Astrocyte of the cerebellum (primary cell): ENCODE measurements at regions of chr4 and their contacts with region 1.

Region 1: DNA sequence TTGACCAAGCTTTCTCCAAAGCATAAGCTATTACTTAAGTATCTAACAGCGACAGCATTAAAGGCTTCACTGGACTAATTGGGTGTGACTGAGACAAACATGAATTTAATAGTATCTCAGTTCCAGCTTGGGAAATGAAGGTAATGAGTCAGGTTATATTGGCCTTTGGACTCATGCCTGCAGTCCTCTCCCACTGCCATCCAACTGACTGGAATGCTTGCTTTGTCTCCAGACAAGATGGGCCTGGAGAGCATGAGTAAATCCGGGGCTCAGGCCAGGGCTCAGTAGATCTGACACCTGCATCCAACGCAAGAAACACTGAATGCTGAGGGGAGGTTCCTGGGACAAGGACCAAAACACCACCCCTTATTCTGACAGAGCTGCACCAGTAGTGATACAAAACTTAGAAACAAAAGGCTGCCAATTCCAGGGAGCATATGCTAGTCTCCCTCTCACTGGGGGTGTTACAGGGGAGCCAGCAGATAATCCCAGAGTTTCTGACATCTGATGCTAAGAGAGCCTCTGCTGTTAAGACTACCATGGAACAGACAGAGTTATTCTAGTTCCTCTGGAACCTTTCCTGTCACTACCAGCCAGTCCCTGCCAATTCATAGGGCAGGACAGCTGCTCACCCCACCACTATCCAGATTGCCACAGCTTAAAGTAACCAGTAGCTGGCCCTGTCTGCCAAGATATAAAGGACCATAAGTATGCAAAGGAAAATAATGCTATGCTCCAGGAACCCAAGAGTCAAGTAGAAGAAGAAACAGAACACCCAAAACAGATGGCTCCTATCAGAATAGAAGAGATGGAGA is 293.8 kb downstream of the IQCM start:
- DNase-seq: no peak
- H3K4me3 ChIP-seq: no peak overlapping the region
- CTCF ChIP-seq: no peak

Region 2: GRCh38 chr4:149595500-149595899 is 73.7 kb after region 1 on chr4:
- in situ Hi-C with region 1: no loop called
- DNase-seq: no peak
- H3K4me3 ChIP-seq: no peak overlapping the region
- CTCF ChIP-seq: no peak

Region 3: DNA sequence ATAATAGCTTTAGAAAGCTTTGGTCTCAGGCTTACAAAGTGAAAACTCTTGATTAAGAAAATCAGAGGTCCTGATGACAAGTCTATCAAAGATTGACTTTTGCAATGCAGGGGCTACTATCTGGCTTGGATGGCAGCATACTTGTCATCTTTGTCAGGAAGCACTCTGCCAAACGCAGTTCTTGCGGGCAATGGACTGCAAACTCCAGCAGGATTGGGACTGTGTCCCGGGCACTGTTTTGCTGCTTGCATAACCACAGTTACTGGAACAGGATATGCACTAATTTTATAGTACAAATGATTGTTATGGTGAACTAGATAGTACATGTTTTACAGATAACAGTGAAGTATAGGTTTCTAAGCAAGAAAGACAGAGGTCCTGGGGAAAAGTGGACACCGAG is 108.3 kb after region 1 on chr4:
- in situ Hi-C with region 1: loop called (anchors 5 kb)
- DNase-seq: no peak
- H3K4me3 ChIP-seq: no peak overlapping the region
- CTCF ChIP-seq: no peak